Activated CD4-positive, alpha-beta T cell treated with anti-CD3 and anti-CD28 coated beads, Interleukin-2, amount 10 ng/mL, durations not matched to agents 7 days and 5 days (primary cell): ENCODE measurements at regions of chr3 and their contacts with region 1.

Region 1: GRCh38 chr3:49916686-49917085 is 12.9 kb downstream of the MON1A start:
- DNase-seq: no peak
- H3K4me3 Mint-ChIP-seq: no peak overlapping the region
- H3K27ac Mint-ChIP-seq: no peak overlapping the region
- H3K4me1 Mint-ChIP-seq: peaks cover 8% of the 10 kb centered on the region
- H3K27me3 Mint-ChIP-seq: no peaks in the 10 kb centered on the region

Region 2: GRCh38 chr3:49906004-49906743 is 10.5 kb before region 1 on chr3:
- CTCF ChIA-PET with region 1: interaction called, 12 read pairs
- POLR2A ChIA-PET with region 1: no interaction called
- DNase-seq: peak; percentile 58
- H3K4me3 Mint-ChIP-seq: peak overlapping the region; percentile 63
- H3K27ac Mint-ChIP-seq: peak overlapping the region; percentile 96
- H3K4me1 Mint-ChIP-seq: peaks cover 43% of the 10 kb centered on the region
- H3K27me3 Mint-ChIP-seq: no peaks in the 10 kb centered on the region